ENCODE measurements at regions of chr12 and their contacts with region 1.

Region 1: GRCh38 chr12:21438643-21439042 is 1.2 kb downstream of the PYROXD1 start:
- DNase-seq: no peak
- ATAC-seq: no peak
- H3K4me3 Mint-ChIP-seq: peak overlapping the region; percentile 91
- H3K27ac Mint-ChIP-seq: peak overlapping the region; percentile 97
- H3K4me1 Mint-ChIP-seq: peaks cover 35% of the 10 kb centered on the region
- H3K27me3 Mint-ChIP-seq: no peaks in the 10 kb centered on the region
- CTCF ChIP-seq: no peak

Region 2: GRCh38 chr12:21451529-21451928 is 12.9 kb after region 1 on chr12:
- CTCF ChIA-PET with region 1: interaction called, 5 read pairs
- POLR2A ChIA-PET with region 1: interaction called, 18 read pairs
- intact Hi-C with region 1: loop called (anchors 1 kb)
- DNase-seq: no peak
- ATAC-seq: no peak
- H3K4me3 Mint-ChIP-seq: no peak overlapping the region
- H3K27ac Mint-ChIP-seq: no peak overlapping the region
- H3K4me1 Mint-ChIP-seq: peaks cover 30% of the 10 kb centered on the region
- H3K27me3 Mint-ChIP-seq: no peaks in the 10 kb centered on the region
- CTCF ChIP-seq: no peak